Naive thymus-derived CD4-positive, alpha-beta T cell (primary cell): ENCODE measurements at regions of chr6 and their contacts with region 1.

Region 1: DNA sequence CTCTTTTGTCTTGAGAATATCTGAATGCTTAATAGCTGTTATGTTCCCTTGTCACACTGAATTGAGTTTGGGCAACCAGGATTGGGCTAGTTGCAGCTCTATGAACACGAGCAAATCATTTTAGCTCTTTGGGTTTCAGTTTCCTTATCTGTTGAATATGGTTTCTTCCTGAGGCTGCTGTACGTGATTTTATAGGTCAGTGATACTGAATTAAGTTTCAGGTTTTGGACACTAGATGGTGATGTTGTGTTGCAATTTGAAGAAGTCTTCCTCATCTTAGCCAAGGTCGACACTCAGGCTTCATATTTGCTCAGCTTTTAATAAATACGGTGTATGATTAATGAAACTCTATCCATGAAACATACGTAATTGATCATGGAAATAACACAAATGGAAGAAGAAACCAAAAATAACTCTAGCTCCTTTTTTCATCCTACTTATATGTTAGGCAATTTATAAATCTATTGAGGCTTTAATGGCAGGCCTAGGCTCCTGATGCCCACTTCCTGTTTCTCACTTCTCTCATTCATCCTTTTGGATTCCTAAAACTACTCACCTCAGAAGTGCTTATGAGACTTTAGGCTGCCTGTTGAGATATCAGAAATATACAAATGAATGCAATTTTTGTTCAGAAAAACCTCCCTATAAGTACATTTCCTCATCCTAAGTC is 354.1 kb upstream of the MAP3K7 start:
- DNase-seq: peak in 7 of 9 donors; percentile 16 to 62 (median 56)
- ATAC-seq: peak; percentile 89
- H3K4me3 ChIP-seq: no peak overlapping the region
- H3K4me3 Mint-ChIP-seq: peak overlapping the region; percentile 3 to 76 (median 49)
- H3K27ac ChIP-seq: no peak overlapping the region
- H3K27ac Mint-ChIP-seq: peak overlapping the region in 6 of 9 donors; percentile 2 to 54 (median 30)
- H3K4me1 ChIP-seq: peaks cover 0 to 4% of the 10 kb centered on the region in 2 donors
- H3K4me1 Mint-ChIP-seq: peaks cover 3 to 9% (median 8%) of the 10 kb centered on the region in 7 donors
- H3K27me3 ChIP-seq: no peaks in the 10 kb centered on the region
- H3K27me3 Mint-ChIP-seq: peaks cover 0 to 10% (median 0%) of the 10 kb centered on the region in 5 donors

Region 2: GRCh38 chr6:90818163-90818562 is 122.8 kb before region 1 on chr6:
- CTCF ChIA-PET with region 1: no interaction called
- POLR2A ChIA-PET with region 1: no interaction called
- intact Hi-C with region 1: no loop called
- DNase-seq: no peak
- ATAC-seq: no peak
- H3K4me3 ChIP-seq: no peak overlapping the region
- H3K4me3 Mint-ChIP-seq: no peak overlapping the region
- H3K27ac ChIP-seq: no peak overlapping the region
- H3K27ac Mint-ChIP-seq: no peak overlapping the region
- H3K4me1 ChIP-seq: no peaks in the 10 kb centered on the region
- H3K4me1 Mint-ChIP-seq: no peaks in the 10 kb centered on the region
- H3K27me3 ChIP-seq: no peaks in the 10 kb centered on the region
- H3K27me3 Mint-ChIP-seq: peaks cover 0 to 24% (median 10%) of the 10 kb centered on the region in 5 donors

Region 3: DNA sequence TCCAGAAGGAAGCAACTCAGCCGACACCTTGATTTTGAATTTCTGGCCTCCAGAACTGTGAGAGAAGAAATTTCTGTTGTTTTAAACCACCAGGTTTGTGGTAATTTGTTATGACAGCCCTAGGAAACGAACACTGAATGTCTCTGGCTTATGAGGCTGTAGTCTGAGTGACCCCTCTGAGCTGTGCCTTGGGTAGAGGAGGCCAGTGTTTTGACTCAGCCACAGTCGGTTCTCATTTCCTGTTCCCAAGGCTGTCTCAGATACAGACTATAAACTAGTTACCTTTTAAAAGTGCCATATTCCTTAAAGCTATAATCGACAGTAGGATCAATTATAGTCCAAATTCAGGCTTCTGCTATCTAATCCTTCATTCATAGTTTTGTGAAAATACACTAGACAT is 37.1 kb after region 1 on chr6:
- CTCF ChIA-PET with region 1: no interaction called
- POLR2A ChIA-PET with region 1: no interaction called
- intact Hi-C with region 1: no loop called
- DNase-seq: no peak
- ATAC-seq: no peak
- H3K4me3 ChIP-seq: no peak overlapping the region
- H3K4me3 Mint-ChIP-seq: no peak overlapping the region
- H3K27ac ChIP-seq: no peak overlapping the region
- H3K27ac Mint-ChIP-seq: no peak overlapping the region
- H3K4me1 ChIP-seq: no peaks in the 10 kb centered on the region
- H3K4me1 Mint-ChIP-seq: peaks cover 0 to 2% (median 0%) of the 10 kb centered on the region in 7 donors
- H3K27me3 ChIP-seq: no peaks in the 10 kb centered on the region
- H3K27me3 Mint-ChIP-seq: peaks cover 0 to 11% (median 8%) of the 10 kb centered on the region in 5 donors

Region 4: GRCh38 chr6:91081452-91082067 is 140.6 kb after region 1 on chr6:
- CTCF ChIA-PET with region 1: no interaction called
- POLR2A ChIA-PET with region 1: no interaction called
- intact Hi-C with region 1: loop called in 1 of 2 experiments (anchors 2 kb)
- DNase-seq: no peak
- ATAC-seq: no peak
- H3K4me3 ChIP-seq: no peak overlapping the region
- H3K4me3 Mint-ChIP-seq: no peak overlapping the region
- H3K27ac ChIP-seq: no peak overlapping the region
- H3K27ac Mint-ChIP-seq: no peak overlapping the region
- H3K4me1 ChIP-seq: no peaks in the 10 kb centered on the region
- H3K4me1 Mint-ChIP-seq: peaks cover 0 to 4% (median 0%) of the 10 kb centered on the region in 7 donors
- H3K27me3 ChIP-seq: no peaks in the 10 kb centered on the region
- H3K27me3 Mint-ChIP-seq: peaks cover 0 to 11% (median 0%) of the 10 kb centered on the region in 5 donors

Region 5: GRCh38 chr6:91240878-91241603 is 300.1 kb after region 1 on chr6:
- CTCF ChIA-PET with region 1: no interaction called
- POLR2A ChIA-PET with region 1: no interaction called
- intact Hi-C with region 1: loop called in 1 of 2 experiments (anchors 10 kb)
- DNase-seq: no peak
- ATAC-seq: no peak
- H3K4me3 ChIP-seq: no peak overlapping the region
- H3K4me3 Mint-ChIP-seq: no peak overlapping the region
- H3K27ac ChIP-seq: no peak overlapping the region
- H3K27ac Mint-ChIP-seq: no peak overlapping the region
- H3K4me1 ChIP-seq: no peaks in the 10 kb centered on the region
- H3K4me1 Mint-ChIP-seq: no peaks in the 10 kb centered on the region
- H3K27me3 ChIP-seq: no peaks in the 10 kb centered on the region
- H3K27me3 Mint-ChIP-seq: no peaks in the 10 kb centered on the region

Region 6: GRCh38 chr6:92647625-92648024 is 1706.7 kb after region 1 on chr6:
- CTCF ChIA-PET with region 1: no interaction called
- POLR2A ChIA-PET with region 1: no interaction called
- intact Hi-C with region 1: loop called in 1 of 2 experiments (anchors 5 kb)
- DNase-seq: no peak
- ATAC-seq: no peak
- H3K4me3 ChIP-seq: no peak overlapping the region
- H3K4me3 Mint-ChIP-seq: no peak overlapping the region
- H3K27ac ChIP-seq: no peak overlapping the region
- H3K27ac Mint-ChIP-seq: no peak overlapping the region
- H3K4me1 ChIP-seq: no peaks in the 10 kb centered on the region
- H3K4me1 Mint-ChIP-seq: no peaks in the 10 kb centered on the region
- H3K27me3 ChIP-seq: no peaks in the 10 kb centered on the region
- H3K27me3 Mint-ChIP-seq: no peaks in the 10 kb centered on the region